GM10248 (cell line): ENCODE measurements at regions of chr12 and their contacts with region 1.

Region 1: GRCh38 chr12:120971299-120972179 is 6.8 kb upstream of the HNF1A start:
- DNase-seq: peak; percentile 80
- CTCF ChIP-seq: peak; percentile 73

Region 2: GRCh38 chr12:120580787-120581723 is 390.5 kb before region 1 on chr12 and contains the start of gene POP5:
- CTCF ChIA-PET with region 1: interaction called, 32 read pairs
- POLR2A ChIA-PET with region 1: no interaction called
- DNase-seq: peak; percentile 95
- CTCF ChIP-seq: no peak

Region 3: DNA sequence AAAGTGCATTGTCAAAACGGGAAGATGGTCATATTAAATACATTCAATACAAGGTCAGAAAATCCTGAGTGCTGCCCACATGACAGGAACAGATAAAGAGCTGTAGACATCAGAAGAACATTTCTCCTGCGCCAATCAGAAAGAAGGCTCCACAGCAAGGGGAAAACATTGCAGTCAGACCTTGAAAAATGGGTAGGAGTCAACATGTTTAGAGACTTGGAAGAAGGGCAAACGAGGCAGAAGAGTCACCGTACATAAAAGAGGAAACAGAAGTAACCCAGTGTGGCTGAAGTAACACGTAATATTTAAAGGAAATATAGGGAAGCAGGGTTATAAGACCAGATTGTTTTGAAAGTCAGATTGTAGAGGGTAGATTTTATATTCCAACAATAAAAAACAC is 79.3 kb before region 1 on chr12:
- CTCF ChIA-PET with region 1: interaction called, 12 read pairs
- POLR2A ChIA-PET with region 1: no interaction called
- DNase-seq: no peak
- CTCF ChIP-seq: no peak

Region 4: DNA sequence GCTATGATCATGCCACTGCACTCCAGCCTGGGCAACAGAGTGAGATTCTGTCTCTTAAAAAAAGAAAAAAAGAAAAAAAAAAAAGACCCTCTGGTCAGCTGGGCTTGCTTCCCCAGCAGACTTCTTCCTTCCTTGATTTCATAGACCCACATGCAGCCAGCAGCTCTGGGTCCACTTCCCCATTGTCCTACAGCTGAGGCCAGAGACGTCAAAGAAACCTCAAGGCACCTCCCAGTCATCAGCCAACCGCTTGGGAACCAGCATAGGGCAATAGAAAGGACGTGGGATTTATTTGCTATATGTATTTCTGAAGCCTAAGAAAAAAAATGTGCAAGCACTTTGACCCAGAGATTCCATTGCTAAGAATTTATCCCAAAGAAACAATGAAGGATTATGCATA is 32.0 kb before region 1 on chr12:
- CTCF ChIA-PET with region 1: interaction called, 20 read pairs
- POLR2A ChIA-PET with region 1: no interaction called
- DNase-seq: no peak
- CTCF ChIP-seq: no peak

Region 5: GRCh38 chr12:120955232-120955631 is 16.3 kb before region 1 on chr12:
- CTCF ChIA-PET with region 1: interaction called, 27 read pairs
- POLR2A ChIA-PET with region 1: no interaction called
- DNase-seq: no peak
- CTCF ChIP-seq: no peak